ENCODE measurements at regions of chr3 and their contacts with region 1.

Region 1: DNA sequence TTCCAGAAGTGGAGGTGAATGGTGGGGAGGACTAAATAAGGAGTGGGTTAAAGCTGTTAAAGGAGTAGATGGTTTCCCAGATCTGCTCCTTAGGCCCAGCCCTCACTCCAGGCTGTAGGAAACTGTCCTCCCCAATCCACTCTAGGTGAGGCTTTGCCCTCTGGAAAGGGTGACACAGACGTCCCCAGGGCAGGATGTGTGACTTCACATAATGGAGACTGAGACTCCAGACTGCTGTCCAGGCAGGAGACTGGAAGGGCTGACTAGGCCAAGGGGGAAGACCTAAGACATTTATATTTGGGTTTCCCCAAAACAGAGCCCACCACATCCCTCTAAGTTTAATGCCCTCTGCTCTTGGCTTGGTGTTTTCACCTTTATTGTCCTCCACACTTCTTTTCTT is 488.5 kb downstream of the SHQ1 start:
- DNase-seq: no peak
- H3K4me3 ChIP-seq: no peak overlapping the region
- H3K27ac ChIP-seq: no peak overlapping the region
- H3K4me1 ChIP-seq: no peaks in the 10 kb centered on the region
- H3K27me3 ChIP-seq: no peaks in the 10 kb centered on the region
- CTCF ChIP-seq: no peak

Region 2: GRCh38 chr3:72375237-72376076 is 15.7 kb after region 1 on chr3:
- CTCF ChIA-PET with region 1: no interaction called
- dilution Hi-C with region 1: no loop called
- in situ Hi-C with region 1: no loop called
- intact Hi-C with region 1: no loop called
- DNase-seq: no peak
- H3K4me3 ChIP-seq: no peak overlapping the region
- H3K27ac ChIP-seq: no peak overlapping the region
- H3K4me1 ChIP-seq: peaks cover 10% of the 10 kb centered on the region
- H3K27me3 ChIP-seq: no peaks in the 10 kb centered on the region
- CTCF ChIP-seq: no peak

Region 3: GRCh38 chr3:72405943-72406566 is 46.3 kb after region 1 on chr3:
- CTCF ChIA-PET with region 1: no interaction called
- dilution Hi-C with region 1: no loop called
- in situ Hi-C with region 1: no loop called
- intact Hi-C with region 1: no loop called
- DNase-seq: no peak
- H3K4me3 ChIP-seq: no peak overlapping the region
- H3K27ac ChIP-seq: no peak overlapping the region
- H3K4me1 ChIP-seq: peaks cover 7% of the 10 kb centered on the region
- H3K27me3 ChIP-seq: no peaks in the 10 kb centered on the region
- CTCF ChIP-seq: no peak

Region 4: DNA sequence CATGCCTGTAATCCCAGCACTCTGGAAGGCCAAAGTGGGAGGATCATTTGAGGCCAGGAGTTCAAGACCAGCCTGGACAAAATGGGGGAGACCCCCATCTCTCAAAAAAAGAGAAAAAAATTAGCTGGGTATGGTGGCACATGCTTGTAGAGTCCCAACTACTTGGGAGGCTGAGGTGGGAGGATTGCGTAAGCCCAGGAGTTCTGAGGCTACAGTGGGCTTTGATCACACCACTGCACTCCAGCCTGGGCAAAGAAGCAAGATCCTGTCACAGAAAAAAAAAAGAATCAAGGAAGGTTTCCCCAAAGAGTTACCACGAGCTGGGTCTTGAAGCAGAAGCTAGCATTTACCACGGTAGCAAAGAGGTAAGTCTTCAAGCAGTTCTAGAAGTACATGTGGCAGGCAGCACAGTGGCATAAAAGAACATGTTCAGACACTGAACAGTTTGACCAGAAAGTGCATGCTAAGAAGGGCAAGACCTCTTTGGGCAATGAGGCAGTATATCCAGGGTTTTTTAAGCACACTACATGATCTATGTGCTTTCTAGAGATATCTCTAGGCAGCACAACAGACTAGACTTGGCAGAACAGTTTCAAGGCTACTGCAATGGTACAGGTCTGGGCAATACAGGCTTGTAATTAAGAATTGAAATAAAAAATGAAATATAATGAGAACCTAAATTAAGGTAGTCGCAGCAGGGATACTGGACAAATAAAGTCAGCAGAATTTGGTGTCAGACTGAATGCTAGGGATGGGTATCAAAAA is 70.0 kb after region 1 on chr3:
- CTCF ChIA-PET with region 1: no interaction called
- dilution Hi-C with region 1: loop called (anchors 5 kb)
- in situ Hi-C with region 1: no loop called
- intact Hi-C with region 1: no loop called
- DNase-seq: no peak
- H3K4me3 ChIP-seq: no peak overlapping the region
- H3K27ac ChIP-seq: no peak overlapping the region
- H3K4me1 ChIP-seq: no peaks in the 10 kb centered on the region
- H3K27me3 ChIP-seq: no peaks in the 10 kb centered on the region
- CTCF ChIP-seq: no peak

Measured in mammary epithelial cell (primary cell).